ENCODE measurements at regions of chr22 and their contacts with region 1.

Region 1: DNA sequence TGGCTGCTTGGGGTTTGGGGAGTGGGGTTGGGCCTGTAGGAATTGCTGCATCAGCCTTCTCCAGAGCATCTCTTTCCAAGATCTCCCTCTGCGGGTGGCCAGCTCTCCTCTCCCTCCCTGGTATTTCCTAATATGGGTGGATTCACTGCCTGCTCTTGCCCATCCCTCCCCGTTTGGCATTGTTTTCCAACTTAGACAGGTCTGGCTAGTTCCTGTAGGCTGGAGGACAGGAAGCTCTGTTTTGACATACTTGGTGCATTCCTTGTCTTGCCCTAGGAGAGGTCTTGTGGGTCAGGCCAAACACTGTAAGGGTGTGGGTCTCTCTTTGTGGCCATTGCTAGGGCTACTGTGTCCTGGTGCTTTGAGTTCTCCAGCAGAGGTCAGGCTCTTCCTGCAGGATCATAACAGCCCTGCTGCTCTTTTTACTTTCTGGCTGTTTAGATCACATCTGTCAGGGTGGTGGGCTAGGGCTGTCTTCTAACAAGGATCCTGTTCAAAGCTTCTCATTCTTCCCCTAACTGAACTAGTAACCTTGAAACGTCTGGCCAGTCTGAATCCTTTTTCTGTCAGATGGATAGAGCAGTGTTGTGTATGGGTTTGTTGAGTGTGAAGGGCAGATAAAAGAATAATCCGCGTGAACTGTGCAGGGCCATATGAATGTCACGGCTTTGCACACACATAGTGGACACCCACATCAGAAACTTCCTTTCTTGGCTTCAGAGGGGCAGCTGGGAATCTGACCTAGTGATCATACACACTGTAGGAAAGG is 18.3 kb upstream of the MICALL1 start:
- DNase-seq: peak in 1 of 2 donors; percentile 29
- ATAC-seq: peak; percentile 51 to 57
- H3K4me3 ChIP-seq: no peak overlapping the region
- H3K27ac ChIP-seq: no peak overlapping the region
- H3K4me1 ChIP-seq: peaks cover 0 to 2% of the 10 kb centered on the region in 2 donors
- H3K27me3 ChIP-seq: no peaks in the 10 kb centered on the region
- CTCF ChIP-seq: peak in 4 of 5 experiments; percentile 8 to 49 (median 38)
- POLR2A ChIP-seq: no peak

Region 2: GRCh38 chr22:37849089-37849751 is 38.6 kb before region 1 on chr22 and contains the start of gene EIF3L:
- in situ Hi-C with region 1: no loop called
- intact Hi-C with region 1: no loop called
- DNase-seq: peak; percentile 87
- ATAC-seq: peak; percentile 76 to 81
- H3K4me3 ChIP-seq: peak within 1 kb of the TSS; percentile 61 to 87 (median 86)
- H3K27ac ChIP-seq: peak within 1 kb of the TSS; percentile 84 to 93 (median 90)
- H3K4me1 ChIP-seq: peaks cover 15 to 18% of the 10 kb centered on the region in 2 donors
- H3K27me3 ChIP-seq: no peaks in the 10 kb centered on the region
- CTCF ChIP-seq: no peak
- POLR2A ChIP-seq: peak; percentile 88 to 92
- total RNA-seq, gene EIF3L: 291 to 406 (median 343) TPM

Region 3: DNA sequence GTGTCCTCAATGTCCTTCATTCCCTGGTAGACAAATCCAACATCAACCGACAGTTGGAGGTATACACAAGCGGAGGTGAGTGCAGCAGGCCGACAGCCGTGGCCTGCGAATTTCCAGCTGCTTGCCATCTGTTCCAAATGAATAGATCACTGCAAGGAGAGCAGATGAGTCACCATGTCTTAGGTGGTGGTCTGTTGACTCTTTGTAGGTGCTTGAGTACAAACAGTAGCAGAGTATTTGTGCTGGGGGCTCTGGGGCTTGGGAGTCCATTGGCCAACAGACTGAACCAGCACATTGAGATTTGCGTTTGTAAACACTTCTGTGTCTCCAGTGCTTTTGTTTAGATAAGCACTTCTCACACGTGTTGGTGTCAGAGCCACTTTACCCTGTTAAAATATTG is 17.5 kb before region 1 on chr22:
- in situ Hi-C with region 1: no loop called
- intact Hi-C with region 1: no loop called
- DNase-seq: no peak
- ATAC-seq: no peak
- H3K4me3 ChIP-seq: no peak overlapping the region
- H3K27ac ChIP-seq: no peak overlapping the region
- H3K4me1 ChIP-seq: no peaks in the 10 kb centered on the region
- H3K27me3 ChIP-seq: no peaks in the 10 kb centered on the region
- CTCF ChIP-seq: no peak
- POLR2A ChIP-seq: no peak

Region 4: DNA sequence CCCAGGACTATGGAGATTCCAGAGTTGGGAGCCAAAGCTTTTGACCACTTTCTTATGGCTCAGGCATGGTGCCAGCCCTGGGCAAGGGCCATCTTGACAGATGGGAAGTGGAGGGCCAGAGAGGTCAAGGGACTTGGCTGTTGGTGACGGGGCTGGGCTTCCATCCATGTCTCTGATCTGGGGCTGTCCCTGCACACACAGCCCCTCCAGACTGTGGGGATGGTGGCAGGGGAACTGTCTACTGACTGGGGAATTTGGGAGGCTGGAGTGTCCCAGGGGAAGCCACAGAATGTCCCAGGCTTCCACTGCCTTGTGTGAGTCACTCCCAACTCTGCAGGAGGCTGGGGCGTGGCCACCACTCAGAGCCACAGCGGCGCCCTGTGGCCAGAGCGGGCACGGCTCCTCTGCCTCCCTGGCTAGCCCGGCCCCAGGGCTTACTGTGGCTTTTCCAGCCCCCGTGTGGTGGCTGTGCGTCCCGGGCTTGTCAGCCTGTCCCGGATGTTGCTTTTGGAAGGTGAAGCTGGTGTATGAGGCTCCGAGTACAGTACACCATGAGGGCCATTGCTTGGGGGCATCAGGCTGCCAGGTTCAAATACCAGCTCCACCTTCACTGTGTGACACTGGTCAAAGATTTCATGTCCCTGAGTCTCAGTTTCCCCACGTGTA is 46.0 kb after region 1 on chr22:
- in situ Hi-C with region 1: no loop called
- intact Hi-C with region 1: loop called (anchors 5 kb)
- DNase-seq: peak; percentile 79 to 88
- ATAC-seq: peak; percentile 96 to 99
- H3K4me3 ChIP-seq: no peak overlapping the region
- H3K27ac ChIP-seq: peak overlapping the region; percentile 63 to 83 (median 70)
- H3K4me1 ChIP-seq: peaks cover 11 to 12% of the 10 kb centered on the region in 2 donors
- H3K27me3 ChIP-seq: no peaks in the 10 kb centered on the region
- CTCF ChIP-seq: peak; percentile 90 to 99 (median 96)
- POLR2A ChIP-seq: no peak